GM10248 (cell line): ENCODE measurements at regions of chr9 and their contacts with region 1.

Region 1: DNA sequence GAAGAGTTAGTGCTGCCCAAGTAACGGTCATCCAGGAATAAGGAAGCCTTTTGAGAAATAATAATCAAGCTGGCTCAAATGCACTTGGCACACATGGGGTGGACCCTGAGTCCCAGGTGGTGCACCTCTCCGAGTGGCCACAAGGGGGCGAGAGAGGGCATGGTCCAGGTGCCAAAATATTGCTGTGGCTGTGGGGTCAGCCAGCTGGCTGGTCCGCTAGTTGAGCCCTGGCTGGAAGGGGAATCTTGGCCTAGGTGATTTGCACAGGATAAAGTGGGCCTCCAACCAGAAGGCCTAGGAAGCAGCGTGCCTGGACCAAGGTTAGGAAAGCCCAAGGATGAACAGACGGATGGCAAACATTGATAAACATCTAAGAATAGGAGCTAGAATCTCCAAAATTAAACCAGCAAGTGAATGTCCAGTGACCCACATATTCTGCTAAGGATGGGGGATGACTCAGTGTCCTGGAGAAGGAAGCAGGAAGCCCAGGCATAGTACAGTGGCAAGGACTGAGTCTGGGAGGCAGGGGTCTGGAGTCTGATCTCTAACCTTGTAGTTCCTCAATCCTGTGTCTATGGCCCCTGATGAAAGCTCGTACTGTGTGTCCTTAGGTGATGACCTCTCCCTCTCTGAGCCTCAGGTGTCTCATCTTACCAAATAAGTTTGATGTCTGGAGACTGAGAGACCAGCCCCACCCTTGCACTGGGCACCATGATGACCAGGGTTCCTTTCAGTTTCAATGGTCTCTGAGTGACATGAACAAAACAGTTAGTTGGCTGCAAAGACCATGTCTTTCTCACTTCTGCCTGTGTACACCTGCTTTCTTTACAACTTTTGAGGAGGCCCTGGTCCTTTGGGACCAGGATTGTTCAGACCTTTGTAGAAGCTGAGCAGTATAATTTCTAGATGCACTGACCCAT is 19.2 kb upstream of the SHB start:
- DNase-seq: peak; percentile 74
- CTCF ChIP-seq: peak; percentile 96

Region 2: DNA sequence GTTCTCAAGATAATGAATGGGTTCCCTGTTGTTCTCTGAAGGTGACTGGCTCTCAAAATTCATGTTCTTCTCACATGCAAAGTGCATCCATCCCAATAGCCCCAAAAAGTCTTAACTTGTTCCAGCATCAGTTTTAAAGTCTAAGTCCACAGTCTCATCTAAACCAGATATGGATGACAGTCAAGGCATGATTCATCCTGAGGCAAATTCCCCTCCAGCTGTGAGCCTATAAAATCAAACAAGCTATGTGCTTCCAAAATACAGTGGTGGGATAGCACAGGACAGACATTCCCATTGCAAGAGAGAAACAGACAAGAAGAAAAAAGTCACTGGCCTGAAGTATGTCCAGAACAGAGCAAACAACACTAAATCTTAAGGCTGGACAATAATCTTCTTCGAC is 537.5 kb before region 1 on chr9:
- CTCF ChIA-PET with region 1: no interaction called
- POLR2A ChIA-PET with region 1: no interaction called
- DNase-seq: no peak
- CTCF ChIP-seq: no peak

Region 3: GRCh38 chr9:37650873-37651768 is 437.1 kb before region 1 on chr9 and contains the start of gene FRMPD1:
- CTCF ChIA-PET with region 1: no interaction called
- POLR2A ChIA-PET with region 1: no interaction called
- DNase-seq: peak; percentile 79
- CTCF ChIP-seq: no peak

Region 4: GRCh38 chr9:38053697-38054461 is 34.4 kb before region 1 on chr9:
- CTCF ChIA-PET with region 1: interaction called, 22 read pairs
- POLR2A ChIA-PET with region 1: no interaction called
- DNase-seq: no peak
- CTCF ChIP-seq: no peak

Region 5: GRCh38 chr9:38066914-38067610 is 21.2 kb before region 1 on chr9:
- CTCF ChIA-PET with region 1: interaction called, 24 read pairs
- POLR2A ChIA-PET with region 1: interaction called, 3 read pairs
- DNase-seq: no peak
- CTCF ChIP-seq: no peak

Region 6: DNA sequence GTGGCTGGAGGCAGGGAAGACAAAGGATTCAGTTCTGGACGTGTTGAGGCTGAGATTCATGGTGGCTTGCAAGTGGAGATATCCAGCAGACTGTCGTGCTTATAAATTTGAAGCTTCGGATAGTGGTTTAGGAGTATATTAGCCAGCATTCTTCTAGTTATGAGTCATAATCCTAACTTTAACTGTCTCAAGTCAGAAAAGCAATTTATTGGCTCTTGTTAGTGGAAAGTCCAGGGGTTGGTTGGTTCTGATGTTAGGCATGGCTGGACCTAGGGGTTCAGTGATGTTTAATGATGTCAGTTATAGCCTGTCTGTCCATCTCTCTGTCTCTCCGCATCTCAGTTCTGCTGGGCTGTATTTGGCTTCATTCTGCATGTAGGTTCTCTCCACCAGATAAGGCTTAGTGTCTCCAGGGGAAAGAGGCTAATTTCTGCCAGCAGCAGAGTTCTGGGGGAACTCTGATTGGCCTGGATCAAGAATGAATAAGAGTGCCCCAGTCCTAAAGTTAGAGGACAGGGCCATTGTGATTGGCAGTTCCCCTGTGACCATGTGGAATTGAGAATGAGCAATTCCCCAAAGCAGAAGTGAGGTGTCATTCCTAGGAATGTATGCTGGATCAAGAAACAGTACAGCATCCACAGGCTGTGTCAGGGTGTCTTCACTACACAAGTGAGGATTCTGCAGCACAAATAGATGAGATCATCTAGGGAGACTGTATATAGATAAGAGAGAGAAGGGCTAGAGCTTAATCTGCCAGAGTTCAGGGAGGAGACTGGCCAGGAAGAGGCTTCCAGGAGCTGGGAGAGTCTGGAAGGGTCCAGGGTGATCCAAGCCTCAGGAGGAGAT is 53.7 kb after region 1 on chr9:
- CTCF ChIA-PET with region 1: interaction called, 10 read pairs
- POLR2A ChIA-PET with region 1: no interaction called
- DNase-seq: no peak
- CTCF ChIP-seq: no peak

Region 7: GRCh38 chr9:38256461-38256860 is 168.2 kb after region 1 on chr9:
- CTCF ChIA-PET with region 1: no interaction called
- POLR2A ChIA-PET with region 1: no interaction called
- DNase-seq: no peak
- CTCF ChIP-seq: no peak

Region 8: DNA sequence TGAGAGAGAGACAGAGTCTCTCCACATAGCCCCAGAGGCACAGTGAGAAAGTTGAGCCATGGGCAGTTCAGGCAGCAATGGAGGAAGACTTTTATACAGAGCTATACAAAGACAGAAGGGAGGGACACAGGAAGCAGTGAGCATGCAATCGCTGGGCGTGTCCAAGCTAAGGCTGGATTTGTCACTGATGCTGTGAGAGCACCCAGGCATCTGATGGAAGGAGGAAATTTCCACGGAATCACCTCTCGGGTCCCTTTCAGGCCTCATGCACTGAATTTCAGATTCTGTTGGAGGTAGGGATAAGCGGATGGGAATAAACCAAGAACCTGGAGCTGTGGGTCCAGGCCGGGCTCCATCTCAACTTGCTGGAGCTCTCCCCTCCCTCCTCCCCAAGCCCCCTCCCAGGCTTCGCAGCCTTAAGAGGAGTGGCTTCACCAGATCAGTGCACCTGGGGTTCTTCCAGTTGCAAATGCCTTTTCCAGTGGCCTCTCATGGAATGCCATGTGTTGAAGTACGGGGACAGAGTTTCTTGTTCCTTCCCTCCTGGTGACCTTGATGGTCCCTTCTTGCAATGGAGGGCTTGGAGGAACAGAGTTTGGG is 189.4 kb after region 1 on chr9:
- CTCF ChIA-PET with region 1: no interaction called
- POLR2A ChIA-PET with region 1: no interaction called
- DNase-seq: no peak
- CTCF ChIP-seq: no peak

Region 9: GRCh38 chr9:38362852-38363593 is 274.8 kb after region 1 on chr9:
- CTCF ChIA-PET with region 1: interaction called, 15 read pairs
- POLR2A ChIA-PET with region 1: no interaction called
- DNase-seq: peak; percentile 58
- CTCF ChIP-seq: peak; percentile 64